Naive thymus-derived CD4-positive, alpha-beta T cell (primary cell): ENCODE measurements at regions of chr20 and their contacts with region 1.

Region 1: DNA sequence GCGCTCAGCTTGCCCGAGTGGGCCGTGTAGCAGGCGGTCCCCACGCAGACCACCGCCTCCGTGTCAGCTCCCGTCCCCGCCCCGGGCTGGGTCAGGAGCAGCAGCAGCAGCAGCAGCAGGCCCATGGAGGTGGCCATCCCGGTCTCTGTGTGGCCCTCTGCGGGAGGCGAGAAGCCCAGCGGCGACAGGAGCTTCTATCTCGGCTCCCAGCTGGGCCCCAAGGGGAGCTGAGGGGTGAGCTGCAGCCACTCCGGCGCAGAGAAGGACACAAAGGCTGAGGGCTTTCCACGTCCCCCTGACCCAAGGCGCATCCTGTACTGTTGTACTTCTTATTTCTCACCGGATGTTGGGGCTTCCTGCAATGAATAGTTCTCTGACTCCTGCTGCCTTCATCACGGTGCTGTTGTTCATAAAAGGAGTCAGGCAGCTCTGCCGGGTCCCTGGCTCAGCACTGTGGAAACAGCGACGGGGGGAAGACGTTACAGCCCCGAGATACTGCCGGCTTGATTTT is at the start of gene CD93:
- DNase-seq: peak in 1 of 9 donors; percentile 41
- ATAC-seq: peak; percentile 73
- H3K4me3 ChIP-seq: no peak within 1 kb of the TSS
- H3K4me3 Mint-ChIP-seq: peak within 1 kb of the TSS in 7 of 10 donors; percentile 16 to 86 (median 56)
- H3K27ac ChIP-seq: no peak within 1 kb of the TSS
- H3K27ac Mint-ChIP-seq: peak within 1 kb of the TSS in 4 of 9 donors; percentile 12 to 94 (median 53)
- H3K4me1 ChIP-seq: no peaks in the 10 kb centered on the region
- H3K4me1 Mint-ChIP-seq: peaks cover 0 to 31% (median 6%) of the 10 kb centered on the region in 7 donors
- H3K27me3 ChIP-seq: no peaks in the 10 kb centered on the region
- H3K27me3 Mint-ChIP-seq: peaks cover 0 to 14% (median 0%) of the 10 kb centered on the region in 5 donors
- total RNA-seq, gene CD93: 0.32 to 61.2 (median 4.6) TPM

Region 2: GRCh38 chr20:23152308-23152892 is 66.3 kb after region 1 on chr20:
- CTCF ChIA-PET with region 1: no interaction called
- POLR2A ChIA-PET with region 1: no interaction called
- intact Hi-C with region 1: loop called in 1 of 2 experiments (anchors 10 kb)
- DNase-seq: no peak
- ATAC-seq: peak; percentile 70
- H3K4me3 ChIP-seq: no peak overlapping the region
- H3K4me3 Mint-ChIP-seq: no peak overlapping the region
- H3K27ac ChIP-seq: no peak overlapping the region
- H3K27ac Mint-ChIP-seq: peak overlapping the region in 1 of 9 donors; percentile 15
- H3K4me1 ChIP-seq: no peaks in the 10 kb centered on the region
- H3K4me1 Mint-ChIP-seq: peaks cover 0 to 56% (median 4%) of the 10 kb centered on the region in 7 donors
- H3K27me3 ChIP-seq: no peaks in the 10 kb centered on the region
- H3K27me3 Mint-ChIP-seq: peaks cover 0 to 24% (median 0%) of the 10 kb centered on the region in 5 donors